ENCODE measurements at regions of chr2 and their contacts with region 1.

Region 1: DNA sequence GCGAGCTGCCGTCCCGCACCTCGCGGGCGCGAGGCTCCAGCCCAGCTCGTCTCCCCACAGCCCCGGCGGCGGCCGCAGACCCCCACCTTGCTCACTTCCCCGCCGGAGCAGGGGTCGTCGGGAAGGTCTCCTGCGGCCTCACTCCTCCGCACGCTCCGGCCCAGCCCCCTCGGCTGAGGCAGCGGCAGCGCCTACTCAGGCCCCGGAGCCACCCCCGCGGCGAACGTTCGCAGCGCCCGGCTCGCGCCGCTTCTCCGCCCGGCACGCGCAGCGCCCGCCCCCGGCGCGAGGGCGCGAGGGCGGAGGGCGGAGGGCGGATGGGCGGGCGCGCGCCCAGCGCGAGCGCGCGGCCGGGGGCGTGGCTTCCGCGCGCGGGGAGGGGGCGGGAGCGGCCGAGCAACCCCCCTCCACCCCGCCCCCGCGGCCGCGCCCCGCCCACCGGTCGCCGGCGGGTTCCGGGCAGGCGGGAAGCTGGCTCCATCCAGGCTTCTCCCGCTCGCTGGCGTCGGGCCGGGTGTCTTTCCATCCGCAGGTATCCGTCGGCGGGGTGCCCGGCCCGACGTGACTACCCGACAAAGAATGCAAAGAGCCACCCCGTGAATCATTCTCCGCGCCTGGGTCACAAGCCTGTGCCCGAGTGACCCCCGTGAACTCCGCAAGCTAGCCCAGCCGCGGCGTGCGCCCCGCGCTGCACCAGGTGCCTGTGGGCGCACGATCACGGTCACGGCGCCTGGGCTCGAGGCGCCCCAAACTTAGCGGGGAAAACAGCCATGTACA is at the start of gene DTNB:
- DNase-seq: peak; percentile 68 to 82 (median 79)
- ATAC-seq: peak; percentile 89
- H3K4me3 ChIP-seq: peak within 1 kb of the TSS; percentile 94
- H3K4me3 Mint-ChIP-seq: peak within 1 kb of the TSS; percentile 84 to 90 (median 88)
- H3K27ac ChIP-seq: peak within 1 kb of the TSS; percentile 80
- H3K27ac Mint-ChIP-seq: peak within 1 kb of the TSS; percentile 74 to 92 (median 84)
- H3K4me1 ChIP-seq: peaks cover 12 to 15% of the 10 kb centered on the region in 2 donors
- H3K4me1 Mint-ChIP-seq: peaks cover 15 to 56% (median 37%) of the 10 kb centered on the region in 7 donors
- H3K27me3 ChIP-seq: no peaks in the 10 kb centered on the region
- H3K27me3 Mint-ChIP-seq: peaks cover 0 to 25% (median 0%) of the 10 kb centered on the region in 5 donors
- total RNA-seq, gene DTNB: 32.8 to 56.2 (median 33.8) TPM

Region 2: GRCh38 chr2:23939987-23940717 is 1733.3 kb before region 1 on chr2 and contains the start of gene UBXN2A:
- CTCF ChIA-PET with region 1: no interaction called
- POLR2A ChIA-PET with region 1: no interaction called
- intact Hi-C with region 1: loop called in 1 of 2 experiments (anchors 2 kb)
- DNase-seq: peak; percentile 59 to 85 (median 79)
- ATAC-seq: peak; percentile 96
- H3K4me3 ChIP-seq: peak within 1 kb of the TSS; percentile 94
- H3K4me3 Mint-ChIP-seq: peak within 1 kb of the TSS; percentile 85 to 97 (median 92)
- H3K27ac ChIP-seq: peak within 1 kb of the TSS; percentile 76
- H3K27ac Mint-ChIP-seq: peak within 1 kb of the TSS; percentile 85 to 94 (median 86)
- H3K4me1 ChIP-seq: peaks cover 6 to 14% of the 10 kb centered on the region in 2 donors
- H3K4me1 Mint-ChIP-seq: peaks cover 23 to 40% (median 34%) of the 10 kb centered on the region in 7 donors
- H3K27me3 ChIP-seq: no peaks in the 10 kb centered on the region
- H3K27me3 Mint-ChIP-seq: peaks cover 0 to 16% (median 7%) of the 10 kb centered on the region in 5 donors
- total RNA-seq, gene UBXN2A: 11.5 to 13.5 (median 12.4) TPM

Region 3: GRCh38 chr2:24792874-24793760 is 880.4 kb before region 1 on chr2 and contains the starts of genes CENPO and PTRHD1:
- CTCF ChIA-PET with region 1: no interaction called
- POLR2A ChIA-PET with region 1: no interaction called
- intact Hi-C with region 1: loop called in 1 of 2 experiments (anchors 5 kb)
- DNase-seq: peak; percentile 93 to 99 (median 97)
- ATAC-seq: peak; percentile 98
- H3K4me3 ChIP-seq: peak within 1 kb of the TSS; percentile 97
- H3K4me3 Mint-ChIP-seq: peak within 1 kb of the TSS; percentile 95 to 100 (median 98)
- H3K27ac ChIP-seq: peak within 1 kb of the TSS; percentile 96
- H3K27ac Mint-ChIP-seq: peak within 1 kb of the TSS; percentile 99 to 100 (median 99)
- H3K4me1 ChIP-seq: peaks cover 6 to 10% of the 10 kb centered on the region in 2 donors
- H3K4me1 Mint-ChIP-seq: peaks cover 5 to 53% (median 20%) of the 10 kb centered on the region in 7 donors
- H3K27me3 ChIP-seq: no peaks in the 10 kb centered on the region
- H3K27me3 Mint-ChIP-seq: no peaks in the 10 kb centered on the region
- total RNA-seq, gene CENPO: 3.6 to 36.6 (median 6.0) TPM
- total RNA-seq, gene PTRHD1: 14.3 to 31.5 (median 17.1) TPM

Region 4: DNA sequence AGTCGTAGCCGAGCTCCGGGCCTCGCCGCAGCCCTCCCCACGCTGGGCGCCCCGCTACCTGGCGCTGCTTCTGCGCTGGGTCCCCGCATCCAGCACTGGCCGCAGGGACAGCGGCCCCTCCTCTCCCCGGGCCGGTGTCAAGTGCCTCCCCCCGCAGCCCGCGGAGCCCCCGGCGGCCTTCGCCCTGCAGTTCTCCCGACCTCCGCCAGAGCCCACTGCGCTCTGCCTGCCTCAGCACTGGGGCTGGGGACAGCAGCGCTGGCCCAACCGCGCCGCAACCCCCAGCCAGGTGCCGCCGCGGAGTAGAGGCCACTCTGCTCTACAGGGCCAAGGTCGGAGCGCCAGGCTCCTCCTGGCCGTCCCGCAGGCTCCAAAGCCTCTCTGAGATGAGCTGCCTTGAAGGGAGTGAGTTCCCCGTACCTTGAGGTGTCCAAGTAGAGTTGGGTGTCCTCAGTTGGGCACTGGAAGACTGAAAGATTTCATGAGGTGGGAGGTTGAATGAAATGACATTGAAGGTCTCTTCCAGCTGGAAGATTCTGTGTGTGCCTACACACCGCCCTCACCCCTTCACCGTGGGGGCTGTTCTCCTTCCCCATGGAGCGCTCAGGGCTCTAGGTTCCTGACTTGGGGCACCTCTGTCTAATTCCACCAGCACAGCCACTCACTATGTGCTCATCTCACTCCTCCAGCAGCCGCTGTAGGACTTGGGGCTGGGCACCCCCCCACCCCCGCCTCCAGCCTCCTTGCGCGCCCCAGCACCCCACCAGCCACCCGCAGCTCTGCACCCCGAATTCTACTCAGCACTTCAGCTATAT is 330.9 kb before region 1 on chr2:
- CTCF ChIA-PET with region 1: no interaction called
- POLR2A ChIA-PET with region 1: no interaction called
- intact Hi-C with region 1: loop called in 1 of 2 experiments (anchors 10 kb)
- DNase-seq: peak; percentile 67 to 88 (median 77)
- ATAC-seq: peak; percentile 95
- H3K4me3 ChIP-seq: peak overlapping the region; percentile 56
- H3K4me3 Mint-ChIP-seq: peak overlapping the region; percentile 68 to 88 (median 78)
- H3K27ac ChIP-seq: no peak overlapping the region
- H3K27ac Mint-ChIP-seq: peak overlapping the region in 6 of 9 donors; percentile 10 to 89 (median 56)
- H3K4me1 ChIP-seq: peaks cover 5 to 29% of the 10 kb centered on the region in 2 donors
- H3K4me1 Mint-ChIP-seq: peaks cover 18 to 30% (median 27%) of the 10 kb centered on the region in 7 donors
- H3K27me3 ChIP-seq: no peaks in the 10 kb centered on the region
- H3K27me3 Mint-ChIP-seq: no peaks in the 10 kb centered on the region

Region 5: GRCh38 chr2:25590921-25591505 is 82.5 kb before region 1 on chr2:
- CTCF ChIA-PET with region 1: no interaction called
- POLR2A ChIA-PET with region 1: no interaction called
- intact Hi-C with region 1: loop called in 1 of 2 experiments (anchors 5 kb)
- DNase-seq: no peak
- ATAC-seq: no peak
- H3K4me3 ChIP-seq: no peak overlapping the region
- H3K4me3 Mint-ChIP-seq: no peak overlapping the region
- H3K27ac ChIP-seq: no peak overlapping the region
- H3K27ac Mint-ChIP-seq: no peak overlapping the region
- H3K4me1 ChIP-seq: no peaks in the 10 kb centered on the region
- H3K4me1 Mint-ChIP-seq: peaks cover 6 to 44% (median 12%) of the 10 kb centered on the region in 7 donors
- H3K27me3 ChIP-seq: no peaks in the 10 kb centered on the region
- H3K27me3 Mint-ChIP-seq: no peaks in the 10 kb centered on the region

Region 6: GRCh38 chr2:25707927-25708590 is 34.6 kb after region 1 on chr2:
- CTCF ChIA-PET with region 1: no interaction called
- POLR2A ChIA-PET with region 1: no interaction called
- intact Hi-C with region 1: no loop called
- DNase-seq: no peak
- ATAC-seq: no peak
- H3K4me3 ChIP-seq: no peak overlapping the region
- H3K4me3 Mint-ChIP-seq: no peak overlapping the region
- H3K27ac ChIP-seq: no peak overlapping the region
- H3K27ac Mint-ChIP-seq: no peak overlapping the region
- H3K4me1 ChIP-seq: no peaks in the 10 kb centered on the region
- H3K4me1 Mint-ChIP-seq: peaks cover 8 to 19% (median 9%) of the 10 kb centered on the region in 7 donors
- H3K27me3 ChIP-seq: no peaks in the 10 kb centered on the region
- H3K27me3 Mint-ChIP-seq: peaks cover 7 to 24% (median 10%) of the 10 kb centered on the region in 5 donors

Region 7: DNA sequence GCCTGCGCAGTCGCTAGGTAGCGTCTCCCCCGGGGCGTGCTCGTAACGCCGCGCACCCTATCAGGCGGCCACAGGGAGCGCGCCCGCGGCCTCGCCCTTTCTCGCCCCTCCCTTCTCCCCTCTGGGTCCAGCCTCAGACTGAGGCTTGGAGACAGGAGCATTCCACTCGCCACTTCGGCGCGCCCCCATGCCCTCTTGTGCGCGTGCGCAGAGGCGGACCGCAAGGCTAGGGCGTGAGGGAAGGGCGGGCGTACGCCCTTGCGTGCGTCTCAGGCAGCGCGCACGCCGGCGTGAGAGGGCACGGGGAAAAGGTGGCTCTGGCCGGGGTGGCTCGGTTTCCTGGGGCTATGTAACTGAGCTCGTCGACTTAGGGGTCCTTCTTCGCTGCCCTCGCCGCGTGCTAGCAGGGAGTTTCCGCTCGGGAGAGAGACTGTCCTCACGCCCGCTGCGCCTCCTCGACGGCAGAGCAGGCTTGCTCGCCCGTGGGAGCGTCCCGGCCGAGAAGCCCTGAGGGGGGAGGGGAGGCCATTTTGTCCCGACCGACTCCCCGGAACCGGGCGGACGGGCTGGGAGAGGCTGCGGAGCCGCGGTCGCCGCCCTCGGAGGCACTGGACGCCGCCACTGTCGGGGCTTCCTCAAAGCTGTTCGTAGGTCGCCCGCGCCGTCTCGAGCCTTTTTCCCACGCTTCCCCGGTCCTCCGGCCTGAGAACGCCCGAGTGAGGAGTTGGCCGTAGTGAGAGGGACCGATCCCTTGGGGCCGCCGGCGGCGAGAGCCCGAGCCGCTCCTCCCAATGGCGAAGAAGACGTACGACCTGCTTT is 360.5 kb after region 1 on chr2 and contains the start of gene RAB10:
- CTCF ChIA-PET with region 1: no interaction called
- POLR2A ChIA-PET with region 1: interaction called, 6 read pairs
- intact Hi-C with region 1: loop called in 1 of 2 experiments (anchors 1 kb)
- DNase-seq: peak; percentile 98 to 100 (median 99)
- ATAC-seq: peak; percentile 95
- H3K4me3 ChIP-seq: peak within 1 kb of the TSS; percentile 96
- H3K4me3 Mint-ChIP-seq: peak within 1 kb of the TSS; percentile 90 to 99 (median 96)
- H3K27ac ChIP-seq: peak within 1 kb of the TSS; percentile 90
- H3K27ac Mint-ChIP-seq: peak within 1 kb of the TSS; percentile 86 to 97 (median 95)
- H3K4me1 ChIP-seq: peaks cover 18 to 24% of the 10 kb centered on the region in 2 donors
- H3K4me1 Mint-ChIP-seq: peaks cover 31 to 48% (median 41%) of the 10 kb centered on the region in 7 donors
- H3K27me3 ChIP-seq: no peaks in the 10 kb centered on the region
- H3K27me3 Mint-ChIP-seq: peaks cover 0 to 2% (median 0%) of the 10 kb centered on the region in 5 donors
- total RNA-seq, gene RAB10: 25.6 to 108 (median 60.5) TPM

Region 8: GRCh38 chr2:26785431-26786206 is 1112.1 kb after region 1 on chr2 and contains the start of gene CENPA:
- CTCF ChIA-PET with region 1: no interaction called
- POLR2A ChIA-PET with region 1: no interaction called
- intact Hi-C with region 1: loop called in 1 of 2 experiments (anchors 10 kb)
- DNase-seq: peak; percentile 86 to 98 (median 96)
- ATAC-seq: peak; percentile 100
- H3K4me3 ChIP-seq: peak within 1 kb of the TSS; percentile 78
- H3K4me3 Mint-ChIP-seq: peak within 1 kb of the TSS; percentile 81 to 97 (median 88)
- H3K27ac ChIP-seq: peak within 1 kb of the TSS; percentile 60
- H3K27ac Mint-ChIP-seq: peak within 1 kb of the TSS; percentile 65 to 97 (median 89)
- H3K4me1 ChIP-seq: peaks cover 0 to 4% of the 10 kb centered on the region in 2 donors
- H3K4me1 Mint-ChIP-seq: peaks cover 10 to 34% (median 11%) of the 10 kb centered on the region in 7 donors
- H3K27me3 ChIP-seq: no peaks in the 10 kb centered on the region
- H3K27me3 Mint-ChIP-seq: peaks cover 0 to 26% (median 24%) of the 10 kb centered on the region in 5 donors
- total RNA-seq, gene CENPA: 0.37 to 25.6 (median 0.73) TPM in 3 of 5 experiments, not detected in the others